WTC11 (cell line): ENCODE measurements at regions of chr1 and their contacts with region 1.

Region 1: GRCh38 chr1:48498096-48498791 is 26.2 kb upstream of the SPATA6 start:
- DNase-seq: peak; percentile 86
- ATAC-seq: peak; percentile 75
- H3K4me3 Mint-ChIP-seq: no peak overlapping the region
- H3K27ac Mint-ChIP-seq: no peak overlapping the region
- H3K4me1 Mint-ChIP-seq: peaks cover 54% of the 10 kb centered on the region
- H3K27me3 Mint-ChIP-seq: no peaks in the 10 kb centered on the region; the same call in 1 of the 2 replicates
- CTCF ChIP-seq: peak; percentile 92

Region 2: DNA sequence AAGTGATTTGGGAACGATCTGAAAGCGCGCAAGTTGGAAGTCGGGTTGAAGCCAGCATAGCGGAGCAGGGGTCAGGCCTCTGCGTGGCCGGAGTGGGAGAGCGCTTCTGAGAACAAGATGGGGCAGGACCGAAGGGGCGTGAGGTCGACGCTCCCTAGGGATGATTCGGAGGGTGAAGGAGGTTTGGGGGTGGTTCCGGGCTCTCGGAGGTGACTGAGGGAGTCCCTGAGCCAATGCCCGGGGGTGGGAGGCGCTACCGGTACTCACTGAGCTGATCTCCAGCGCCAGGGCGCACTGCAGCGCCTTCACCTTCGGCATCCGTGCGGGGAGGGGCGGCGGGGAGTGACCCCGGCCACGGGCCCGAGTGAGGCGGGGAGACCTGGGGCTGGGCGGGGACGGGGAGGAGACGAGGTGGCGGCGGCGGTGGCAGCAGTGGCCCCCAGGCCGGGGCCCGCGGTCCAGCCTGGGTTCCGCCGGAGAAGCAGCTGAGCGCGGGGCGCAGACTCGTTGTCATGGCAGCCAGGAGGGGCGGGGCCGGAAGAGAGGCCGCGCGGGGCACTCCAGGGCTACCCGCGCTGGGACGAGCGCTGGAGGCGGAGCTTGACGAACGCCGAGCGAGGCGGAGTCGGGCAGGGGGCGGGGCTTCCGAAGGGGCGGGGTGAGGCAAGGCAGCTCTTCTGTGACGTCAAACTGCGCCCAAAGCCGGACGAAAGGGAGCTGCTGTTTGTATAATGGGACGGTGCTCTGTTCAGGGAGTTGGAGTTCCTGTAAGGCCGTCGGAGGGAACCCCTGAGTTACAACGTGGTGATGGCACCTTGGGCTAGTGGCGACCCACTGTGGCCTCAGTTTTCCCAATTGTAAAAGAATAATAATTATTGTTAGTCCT is 26.3 kb before region 1 on chr1 and contains the start of gene SPATA6:
- CTCF ChIA-PET with region 1: interaction called, 53 read pairs
- POLR2A ChIA-PET with region 1: interaction called, 3 read pairs
- DNase-seq: peak; percentile 98
- ATAC-seq: peak; percentile 91
- H3K4me3 Mint-ChIP-seq: peak within 1 kb of the TSS; percentile 96
- H3K27ac Mint-ChIP-seq: peak within 1 kb of the TSS; percentile 98
- H3K4me1 Mint-ChIP-seq: peaks cover 27% of the 10 kb centered on the region
- H3K27me3 Mint-ChIP-seq: peaks cover 14% of the 10 kb centered on the region
- CTCF ChIP-seq: no peak
- total RNA-seq, gene SPATA6: 16.0 to 17.7 TPM (median 17.1 TPM) in 3 replicates

Region 3: DNA sequence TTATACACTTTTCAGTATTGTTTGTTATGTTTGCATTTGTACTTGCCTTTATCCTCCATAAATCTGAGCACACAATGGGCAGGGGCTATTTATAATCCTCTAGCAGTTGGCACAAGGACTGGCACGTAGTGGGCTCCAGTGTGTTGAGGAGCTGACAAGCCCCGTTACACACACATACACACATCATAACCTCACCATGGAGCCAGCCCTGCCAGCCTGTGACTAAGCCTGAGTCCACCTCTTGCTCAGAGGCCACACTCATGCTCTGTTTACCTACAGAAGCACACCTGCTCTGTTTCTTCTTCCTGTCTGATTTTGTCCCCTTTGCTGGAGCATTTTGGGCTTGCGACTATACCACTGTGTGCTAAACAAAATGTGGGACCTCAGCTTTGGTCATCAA is 38.2 kb after region 1 on chr1:
- CTCF ChIA-PET with region 1: interaction called, 74 read pairs
- POLR2A ChIA-PET with region 1: no interaction called
- DNase-seq: no peak
- ATAC-seq: no peak
- H3K4me3 Mint-ChIP-seq: no peak overlapping the region
- H3K27ac Mint-ChIP-seq: no peak overlapping the region
- H3K4me1 Mint-ChIP-seq: peaks cover 15% of the 10 kb centered on the region
- H3K27me3 Mint-ChIP-seq: peaks cover 3% of the 10 kb centered on the region
- CTCF ChIP-seq: no peak